ENCODE measurements at regions of chr1 and their contacts with region 1.

Region 1: DNA sequence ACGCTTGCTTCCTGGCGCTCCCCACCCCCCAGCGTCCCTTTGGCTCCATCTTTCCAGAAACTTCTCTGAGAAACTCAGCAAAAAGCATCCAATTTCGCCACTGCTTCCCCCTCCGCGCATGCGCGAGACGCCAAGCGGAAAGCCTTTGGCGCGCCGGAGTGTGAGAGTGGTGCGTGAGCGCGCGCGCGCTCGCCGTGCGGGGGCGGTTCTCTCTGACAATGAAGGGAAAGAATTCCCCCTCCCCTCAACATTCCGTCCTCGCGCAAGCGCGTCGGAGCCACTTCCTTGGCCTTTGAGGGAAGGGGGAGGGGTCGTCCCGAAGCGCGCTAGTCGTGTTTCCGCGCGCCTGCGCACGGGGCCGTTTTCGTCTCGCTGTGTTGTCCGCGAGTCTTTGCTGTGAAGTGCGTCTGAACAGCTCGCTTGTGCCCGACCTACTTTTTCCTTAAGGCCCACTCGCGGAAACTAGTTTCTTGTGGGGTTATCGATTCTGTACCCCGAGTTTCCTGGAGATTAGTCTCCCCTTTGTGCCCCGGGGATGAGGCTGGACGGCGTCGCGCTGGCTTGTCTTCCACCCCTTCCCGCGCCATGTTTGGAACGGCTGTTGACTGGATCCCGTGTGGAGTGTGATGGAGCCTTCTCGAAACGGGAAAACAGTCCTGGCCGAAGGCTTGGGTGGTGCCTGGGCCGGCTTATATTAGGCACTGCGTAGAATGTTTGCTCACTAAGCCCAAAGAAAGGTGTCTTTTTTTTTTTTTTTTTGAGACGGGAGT is 11.6 kb upstream of the SPEN start:
- DNase-seq: peak; percentile 96 to 98
- H3K4me3 ChIP-seq: peak overlapping the region; percentile 64
- H3K4me3 Mint-ChIP-seq: peak overlapping the region; percentile 88
- H3K27ac Mint-ChIP-seq: peak overlapping the region; percentile 96
- H3K4me1 ChIP-seq: no peaks in the 10 kb centered on the region
- H3K4me1 Mint-ChIP-seq: no peaks in the 10 kb centered on the region
- H3K27me3 ChIP-seq: no peaks in the 10 kb centered on the region
- H3K27me3 Mint-ChIP-seq: no peaks in the 10 kb centered on the region
- CTCF ChIP-seq: no peak

Region 2: DNA sequence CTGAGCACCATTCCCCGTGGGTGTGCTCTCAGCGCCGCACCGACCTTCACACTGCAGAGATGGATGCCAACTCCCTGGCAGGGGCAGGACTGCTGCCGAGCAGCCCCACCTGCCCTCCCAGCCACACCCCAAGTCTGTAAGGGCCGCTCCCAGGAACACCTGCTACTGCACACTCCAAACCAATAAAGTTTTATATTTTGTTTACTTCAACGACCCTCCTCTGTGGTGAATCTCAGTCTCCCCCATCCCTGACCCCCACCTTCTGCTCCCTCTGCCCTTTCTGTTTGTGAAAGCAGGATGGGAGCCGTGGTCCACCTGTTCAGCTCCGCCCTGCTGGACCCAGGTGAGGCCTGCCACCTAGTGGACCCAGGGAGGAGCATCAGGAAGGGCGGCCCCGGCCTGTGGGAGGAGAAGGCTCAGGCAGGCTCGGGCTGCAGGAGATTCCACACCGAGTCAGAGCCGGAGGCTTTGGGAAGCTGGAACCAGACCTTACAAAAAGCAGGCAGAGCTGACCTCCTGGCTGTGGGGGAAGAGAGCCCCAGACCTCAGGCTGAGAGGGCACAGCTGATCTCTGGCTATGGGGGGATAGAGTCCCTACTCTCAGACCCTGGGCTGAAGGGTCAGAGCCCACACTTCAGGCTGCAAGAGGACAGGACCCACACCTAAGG is 94.6 kb before region 1 on chr1:
- CTCF ChIA-PET with region 1: no interaction called
- POLR2A ChIA-PET with region 1: no interaction called
- intact Hi-C with region 1: no loop called
- DNase-seq: peak; percentile 89
- H3K4me3 ChIP-seq: peak overlapping the region; percentile 0; the same call in 1 of the 2 replicates
- H3K4me3 Mint-ChIP-seq: peak overlapping the region; percentile 66
- H3K27ac Mint-ChIP-seq: peak overlapping the region; percentile 82
- H3K4me1 ChIP-seq: peaks cover 17% of the 10 kb centered on the region
- H3K4me1 Mint-ChIP-seq: peaks cover 7% of the 10 kb centered on the region
- H3K27me3 ChIP-seq: no peaks in the 10 kb centered on the region
- H3K27me3 Mint-ChIP-seq: no peaks in the 10 kb centered on the region
- CTCF ChIP-seq: peak; percentile 82 to 92

Region 3: DNA sequence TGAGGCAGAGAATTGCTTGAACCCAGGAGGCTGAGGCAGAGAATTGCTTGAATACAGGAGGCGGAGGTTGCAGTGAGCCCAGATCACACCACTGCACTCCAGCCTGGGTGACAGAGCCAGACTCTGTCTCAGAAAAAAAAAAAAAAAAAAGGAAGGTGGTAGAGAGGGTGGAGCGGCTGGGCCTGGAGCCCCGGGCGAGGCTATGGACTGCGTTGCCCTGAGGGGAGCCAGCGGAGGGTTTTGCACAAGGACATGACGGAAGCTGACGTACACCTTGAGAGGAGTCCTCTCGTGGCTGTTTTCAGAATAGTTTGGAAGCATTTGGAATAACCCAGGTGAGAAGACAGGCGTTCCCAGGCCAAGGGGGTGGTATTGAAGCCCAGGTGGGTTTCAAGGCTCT is 84.2 kb before region 1 on chr1:
- CTCF ChIA-PET with region 1: no interaction called
- POLR2A ChIA-PET with region 1: no interaction called
- intact Hi-C with region 1: no loop called
- DNase-seq: no peak
- H3K4me3 ChIP-seq: no peak overlapping the region
- H3K4me3 Mint-ChIP-seq: no peak overlapping the region
- H3K27ac Mint-ChIP-seq: no peak overlapping the region
- H3K4me1 ChIP-seq: peaks cover 8% of the 10 kb centered on the region
- H3K4me1 Mint-ChIP-seq: peaks cover 8% of the 10 kb centered on the region
- H3K27me3 ChIP-seq: no peaks in the 10 kb centered on the region
- H3K27me3 Mint-ChIP-seq: no peaks in the 10 kb centered on the region
- CTCF ChIP-seq: no peak

Region 4: GRCh38 chr1:15788624-15789301 is 47.2 kb before region 1 on chr1:
- CTCF ChIA-PET with region 1: interaction called, 10 read pairs
- POLR2A ChIA-PET with region 1: interaction called, 5 read pairs
- intact Hi-C with region 1: no loop called
- DNase-seq: no peak
- H3K4me3 ChIP-seq: no peak overlapping the region
- H3K4me3 Mint-ChIP-seq: no peak overlapping the region
- H3K27ac Mint-ChIP-seq: peak overlapping the region; percentile 71
- H3K4me1 ChIP-seq: peaks cover 44% of the 10 kb centered on the region
- H3K4me1 Mint-ChIP-seq: peaks cover 33% of the 10 kb centered on the region
- H3K27me3 ChIP-seq: no peaks in the 10 kb centered on the region
- H3K27me3 Mint-ChIP-seq: no peaks in the 10 kb centered on the region
- CTCF ChIP-seq: no peak

Region 5: DNA sequence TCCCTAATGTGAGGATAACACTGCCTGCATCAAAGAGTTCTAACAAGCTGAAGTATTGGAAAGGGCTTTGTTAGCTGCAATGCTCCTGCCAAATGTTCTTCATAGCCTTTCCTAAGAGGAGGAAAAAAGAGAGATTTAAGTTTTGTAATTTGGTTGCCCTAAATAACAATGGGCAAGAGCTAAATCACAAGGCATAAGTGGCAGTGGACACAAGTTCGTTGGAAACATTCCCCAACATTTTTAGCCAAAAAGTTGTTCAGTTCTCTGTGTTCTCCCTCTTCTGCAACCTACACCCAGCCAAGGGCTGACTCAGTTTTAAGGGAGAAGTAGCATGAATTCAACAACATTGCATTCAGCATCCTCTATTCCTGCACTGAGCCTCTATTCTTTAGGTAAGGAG is 25.9 kb before region 1 on chr1:
- CTCF ChIA-PET with region 1: interaction called, 17 read pairs
- POLR2A ChIA-PET with region 1: interaction called, 12 read pairs
- intact Hi-C with region 1: no loop called
- DNase-seq: no peak
- H3K4me3 ChIP-seq: no peak overlapping the region
- H3K4me3 Mint-ChIP-seq: no peak overlapping the region
- H3K27ac Mint-ChIP-seq: peak overlapping the region; percentile 61
- H3K4me1 ChIP-seq: peaks cover 11% of the 10 kb centered on the region
- H3K4me1 Mint-ChIP-seq: peaks cover 5% of the 10 kb centered on the region
- H3K27me3 ChIP-seq: no peaks in the 10 kb centered on the region
- H3K27me3 Mint-ChIP-seq: no peaks in the 10 kb centered on the region
- CTCF ChIP-seq: no peak

Region 6: DNA sequence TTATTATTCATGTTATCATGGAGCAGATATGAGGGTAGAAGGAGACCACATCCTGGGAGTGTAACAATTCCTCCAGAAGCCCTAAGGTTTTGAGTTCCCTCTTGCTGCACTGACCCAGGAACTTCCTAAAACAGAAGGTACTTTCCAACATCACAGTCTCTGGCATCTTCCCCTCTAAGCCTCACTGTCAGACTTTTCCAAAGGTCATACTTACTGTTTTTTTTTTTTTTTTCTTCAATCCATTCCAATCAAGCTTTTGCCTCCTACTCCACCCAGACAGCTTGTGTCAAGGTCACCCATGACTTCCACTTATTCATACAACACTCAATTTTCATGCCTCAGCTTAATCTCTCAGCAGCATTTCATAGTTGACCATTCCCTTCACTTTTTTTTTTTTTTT is 10.1 kb before region 1 on chr1:
- CTCF ChIA-PET with region 1: interaction called, 8 read pairs
- POLR2A ChIA-PET with region 1: interaction called, 10 read pairs
- intact Hi-C with region 1: no loop called
- DNase-seq: no peak
- H3K4me3 ChIP-seq: no peak overlapping the region
- H3K4me3 Mint-ChIP-seq: no peak overlapping the region
- H3K27ac Mint-ChIP-seq: no peak overlapping the region
- H3K4me1 ChIP-seq: no peaks in the 10 kb centered on the region
- H3K4me1 Mint-ChIP-seq: peaks cover 8% of the 10 kb centered on the region
- H3K27me3 ChIP-seq: no peaks in the 10 kb centered on the region
- H3K27me3 Mint-ChIP-seq: no peaks in the 10 kb centered on the region
- CTCF ChIP-seq: no peak

Region 7: GRCh38 chr1:15902882-15903281 is 67.0 kb after region 1 on chr1:
- CTCF ChIA-PET with region 1: interaction called, 10 read pairs
- POLR2A ChIA-PET with region 1: no interaction called
- intact Hi-C with region 1: no loop called
- DNase-seq: no peak
- H3K4me3 ChIP-seq: no peak overlapping the region
- H3K4me3 Mint-ChIP-seq: no peak overlapping the region
- H3K27ac Mint-ChIP-seq: no peak overlapping the region
- H3K4me1 ChIP-seq: no peaks in the 10 kb centered on the region
- H3K4me1 Mint-ChIP-seq: no peaks in the 10 kb centered on the region
- H3K27me3 ChIP-seq: no peaks in the 10 kb centered on the region
- H3K27me3 Mint-ChIP-seq: no peaks in the 10 kb centered on the region
- CTCF ChIP-seq: no peak

Region 8: GRCh38 chr1:15918962-15919715 is 83.2 kb after region 1 on chr1:
- CTCF ChIA-PET with region 1: no interaction called
- POLR2A ChIA-PET with region 1: no interaction called
- intact Hi-C with region 1: no loop called
- DNase-seq: no peak
- H3K4me3 ChIP-seq: no peak overlapping the region
- H3K4me3 Mint-ChIP-seq: no peak overlapping the region
- H3K27ac Mint-ChIP-seq: no peak overlapping the region
- H3K4me1 ChIP-seq: peaks cover 7% of the 10 kb centered on the region; the same call in 1 of the 2 replicates
- H3K4me1 Mint-ChIP-seq: no peaks in the 10 kb centered on the region
- H3K27me3 ChIP-seq: no peaks in the 10 kb centered on the region
- H3K27me3 Mint-ChIP-seq: no peaks in the 10 kb centered on the region
- CTCF ChIP-seq: no peak